Caco-2 (cell line): ENCODE measurements at regions of chr10 and their contacts with region 1.

Region 1: GRCh38 chr10:33952692-33953348 is 618.4 kb upstream of the NRP1 start:
- DNase-seq: no peak
- H3K4me3 ChIP-seq: no peak overlapping the region
- H3K4me3 Mint-ChIP-seq: no peak overlapping the region
- H3K27ac Mint-ChIP-seq: no peak overlapping the region
- H3K4me1 ChIP-seq: no peaks in the 10 kb centered on the region
- H3K4me1 Mint-ChIP-seq: no peaks in the 10 kb centered on the region
- H3K27me3 ChIP-seq: no peaks in the 10 kb centered on the region
- H3K27me3 Mint-ChIP-seq: no peaks in the 10 kb centered on the region
- CTCF ChIP-seq: no peak

Region 2: GRCh38 chr10:33938001-33938400 is 14.8 kb before region 1 on chr10:
- CTCF ChIA-PET with region 1: no interaction called
- POLR2A ChIA-PET with region 1: no interaction called
- intact Hi-C with region 1: no loop called
- DNase-seq: no peak
- H3K4me3 ChIP-seq: no peak overlapping the region
- H3K4me3 Mint-ChIP-seq: no peak overlapping the region
- H3K27ac Mint-ChIP-seq: no peak overlapping the region
- H3K4me1 ChIP-seq: 0 out of 2 replicates have a peak, but pooled peaks cover 4% of the 10 kb centered on the region
- H3K4me1 Mint-ChIP-seq: peaks cover 8% of the 10 kb centered on the region
- H3K27me3 ChIP-seq: no peaks in the 10 kb centered on the region
- H3K27me3 Mint-ChIP-seq: no peaks in the 10 kb centered on the region
- CTCF ChIP-seq: no peak

Region 3: DNA sequence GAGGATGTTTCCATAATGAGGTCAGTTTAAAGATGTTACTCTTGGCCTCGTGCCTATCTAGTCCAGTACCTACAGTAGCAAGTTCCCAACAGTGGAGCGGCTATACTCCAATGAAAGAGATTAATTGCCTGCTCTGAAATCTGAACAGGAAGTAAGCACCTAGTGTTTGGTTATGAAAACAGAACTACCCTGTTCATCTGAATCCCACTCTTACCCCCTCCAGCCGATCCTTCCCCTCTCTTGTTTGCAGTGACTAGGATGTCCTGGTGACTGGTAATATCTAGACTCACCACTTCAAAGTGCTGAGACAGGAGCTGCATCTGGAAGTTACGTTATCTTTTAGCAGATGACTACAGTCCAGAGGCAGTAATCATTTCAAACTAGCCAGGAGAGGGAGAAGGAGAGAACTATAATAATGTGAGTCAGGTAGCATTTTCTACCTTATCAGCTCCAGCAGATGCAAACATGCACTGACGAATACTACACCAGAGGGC is 48.3 kb after region 1 on chr10:
- CTCF ChIA-PET with region 1: no interaction called
- POLR2A ChIA-PET with region 1: no interaction called
- intact Hi-C with region 1: loop called (anchors 5 kb)
- DNase-seq: peak in 1 of 2 experiments; percentile 16
- H3K4me3 ChIP-seq: no peak overlapping the region
- H3K4me3 Mint-ChIP-seq: no peak overlapping the region
- H3K27ac Mint-ChIP-seq: no peak overlapping the region
- H3K4me1 ChIP-seq: peaks cover 12% of the 10 kb centered on the region
- H3K4me1 Mint-ChIP-seq: peaks cover 19% of the 10 kb centered on the region
- H3K27me3 ChIP-seq: no peaks in the 10 kb centered on the region
- H3K27me3 Mint-ChIP-seq: no peaks in the 10 kb centered on the region
- CTCF ChIP-seq: no peak